ENCODE measurements at regions of chr15 and their contacts with region 1.

Region 1: DNA sequence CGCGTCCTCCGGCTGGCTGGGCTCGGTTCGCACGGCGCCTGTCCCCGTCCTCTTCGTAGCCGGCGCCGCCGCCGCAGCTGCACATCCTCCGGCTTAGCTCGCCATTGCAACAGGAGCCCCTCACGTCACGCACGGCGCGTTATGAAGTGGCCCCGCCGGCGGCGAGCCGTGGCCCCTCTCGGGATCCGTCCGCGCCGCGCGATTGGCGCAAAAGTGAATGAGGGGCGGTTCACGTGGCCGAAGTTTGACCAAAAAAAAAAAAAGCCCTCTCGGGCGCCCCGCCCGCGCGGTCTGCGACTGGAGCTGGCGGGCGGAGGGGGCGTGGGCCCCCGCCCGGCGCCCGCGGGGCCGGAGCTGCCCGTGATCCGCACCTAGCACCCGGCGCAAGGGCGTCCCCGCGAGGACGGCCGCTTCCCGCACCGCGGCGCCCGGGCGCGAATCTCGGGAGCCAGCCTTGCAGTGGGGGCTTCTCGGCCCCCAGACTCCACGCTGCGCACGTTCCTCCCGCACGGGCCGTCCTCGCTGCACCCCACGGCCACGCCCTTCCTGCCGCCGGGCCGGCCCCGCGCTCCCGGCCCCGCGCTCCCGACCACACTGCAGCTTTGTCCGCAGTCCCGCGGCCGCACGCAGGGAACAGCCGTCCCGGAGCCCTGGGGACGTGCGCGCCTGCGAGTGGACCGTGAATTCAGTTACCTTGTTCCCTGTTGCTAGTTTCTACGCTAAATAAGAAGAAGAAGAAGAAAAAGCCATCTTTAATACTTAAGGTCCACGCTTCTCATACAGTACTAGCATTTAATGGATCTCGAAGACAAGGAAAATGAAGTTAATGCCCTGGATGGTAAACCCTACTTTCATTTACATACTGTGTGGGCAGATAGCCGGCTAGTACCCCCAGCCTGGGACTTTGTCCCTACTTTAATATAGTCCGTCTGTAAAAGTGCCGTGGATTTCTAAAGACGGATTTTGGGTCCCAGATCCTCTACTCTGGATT is at the start of gene CHSY1:
- DNase-seq: peak; percentile 80 to 87
- H3K4me3 ChIP-seq: peak within 1 kb of the TSS; percentile 88
- H3K4me3 Mint-ChIP-seq: peak within 1 kb of the TSS; percentile 87
- H3K27ac Mint-ChIP-seq: peak within 1 kb of the TSS; percentile 67
- H3K4me1 ChIP-seq: peaks cover 17% of the 10 kb centered on the region
- H3K4me1 Mint-ChIP-seq: peaks cover 8% of the 10 kb centered on the region
- H3K27me3 ChIP-seq: no peaks in the 10 kb centered on the region
- H3K27me3 Mint-ChIP-seq: no peaks in the 10 kb centered on the region
- CTCF ChIP-seq: no peak
- total RNA-seq, gene CHSY1: 17.5 and 18.7 TPM in 2 replicates

Region 2: DNA sequence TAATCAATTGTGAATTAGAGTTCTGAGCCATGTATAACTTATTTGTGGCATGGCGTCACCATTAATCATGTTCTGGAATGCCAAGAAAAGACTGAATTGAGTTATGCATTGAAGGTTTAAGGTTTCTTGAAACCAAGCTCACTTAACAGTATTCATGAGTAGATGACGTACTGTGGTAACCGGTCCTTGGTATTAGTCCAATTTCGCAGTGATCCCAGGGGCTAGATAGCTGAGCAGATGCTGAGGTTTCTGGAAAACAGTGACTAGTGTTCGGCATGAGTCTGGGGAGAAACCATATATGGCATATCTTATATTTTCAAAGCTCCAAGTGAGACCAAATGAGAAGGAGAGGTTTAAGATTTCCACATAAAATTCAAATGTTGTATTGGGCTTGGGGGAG is 1300.6 kb before region 1 on chr15:
- CTCF ChIA-PET with region 1: no interaction called
- POLR2A ChIA-PET with region 1: interaction called, 10 read pairs
- intact Hi-C with region 1: no loop called
- DNase-seq: no peak
- H3K4me3 ChIP-seq: no peak overlapping the region
- H3K4me3 Mint-ChIP-seq: no peak overlapping the region
- H3K27ac Mint-ChIP-seq: no peak overlapping the region
- H3K4me1 ChIP-seq: no peaks in the 10 kb centered on the region
- H3K4me1 Mint-ChIP-seq: no peaks in the 10 kb centered on the region
- H3K27me3 ChIP-seq: no peaks in the 10 kb centered on the region
- H3K27me3 Mint-ChIP-seq: no peaks in the 10 kb centered on the region
- CTCF ChIP-seq: no peak

Region 3: DNA sequence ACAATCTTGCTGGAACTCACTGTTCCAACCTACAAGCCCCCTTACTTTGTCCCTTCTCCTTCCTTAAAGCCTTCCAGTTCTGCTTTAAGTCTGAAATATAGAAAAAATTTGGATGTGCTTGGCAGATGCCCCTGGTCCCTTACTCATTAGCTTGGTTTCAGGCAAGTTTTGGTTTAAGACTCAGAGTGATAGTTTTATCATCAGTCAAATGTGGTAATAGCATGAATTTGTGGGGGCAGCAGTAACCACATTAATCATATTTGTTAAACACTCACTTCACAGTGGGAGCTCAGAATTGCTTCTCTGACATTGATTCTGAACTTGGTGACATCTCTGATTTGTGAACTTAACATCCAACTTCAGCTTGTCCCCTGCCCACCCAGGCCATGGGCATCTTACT is 430.8 kb before region 1 on chr15:
- CTCF ChIA-PET with region 1: no interaction called
- POLR2A ChIA-PET with region 1: no interaction called
- intact Hi-C with region 1: no loop called
- DNase-seq: no peak
- H3K4me3 ChIP-seq: no peak overlapping the region
- H3K4me3 Mint-ChIP-seq: no peak overlapping the region
- H3K27ac Mint-ChIP-seq: no peak overlapping the region
- H3K4me1 ChIP-seq: no peaks in the 10 kb centered on the region
- H3K4me1 Mint-ChIP-seq: no peaks in the 10 kb centered on the region
- H3K27me3 ChIP-seq: no peaks in the 10 kb centered on the region
- H3K27me3 Mint-ChIP-seq: no peaks in the 10 kb centered on the region
- CTCF ChIP-seq: no peak

Measured in Caco-2 (cell line).